ENCODE measurements at regions of chr3 and their contacts with region 1.

Region 1: DNA sequence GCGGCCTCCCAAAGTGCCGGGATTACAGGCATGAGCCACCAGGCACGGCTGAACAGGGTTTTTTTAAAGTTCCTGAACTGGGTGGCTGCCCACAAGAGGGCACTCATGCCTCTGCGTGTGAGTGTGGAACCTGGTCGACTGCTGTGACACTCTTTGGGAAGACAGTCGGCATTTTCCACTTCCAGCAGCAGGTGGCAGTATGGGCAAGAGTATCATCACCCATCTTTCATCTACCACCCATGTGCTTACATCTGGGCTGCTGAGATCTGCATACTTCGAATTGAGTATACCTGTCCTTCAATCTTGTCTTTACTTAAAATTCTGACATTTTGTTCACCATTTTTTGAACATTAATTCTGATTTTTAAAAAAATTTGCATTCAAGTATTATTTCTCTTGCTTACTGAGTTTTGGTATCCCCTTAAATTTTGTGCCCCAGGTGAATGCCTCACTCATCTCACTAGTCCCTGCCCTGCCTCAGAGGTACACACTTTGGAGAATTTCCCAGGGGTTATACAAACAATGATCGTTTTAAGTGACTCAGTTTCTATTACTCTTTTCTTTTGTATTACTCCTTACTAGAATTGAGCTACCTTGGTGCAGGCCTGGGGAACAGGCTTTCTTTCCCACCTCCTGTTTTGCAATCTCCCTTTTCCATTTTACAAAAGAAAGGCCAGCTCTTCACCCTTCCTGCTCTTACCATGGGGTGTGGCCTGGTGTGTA is 11.8 kb downstream of the CLEC3B start:
- DNase-seq: peak; percentile 95
- CTCF ChIP-seq: peak; percentile 84

Region 2: GRCh38 chr3:45507820-45508317 is 470.0 kb after region 1 on chr3:
- in situ Hi-C with region 1: loop called (anchors 25 kb)
- DNase-seq: no peak
- CTCF ChIP-seq: peak; percentile 15